ENCODE measurements at regions of chr7 and their contacts with region 1.

Region 1: DNA sequence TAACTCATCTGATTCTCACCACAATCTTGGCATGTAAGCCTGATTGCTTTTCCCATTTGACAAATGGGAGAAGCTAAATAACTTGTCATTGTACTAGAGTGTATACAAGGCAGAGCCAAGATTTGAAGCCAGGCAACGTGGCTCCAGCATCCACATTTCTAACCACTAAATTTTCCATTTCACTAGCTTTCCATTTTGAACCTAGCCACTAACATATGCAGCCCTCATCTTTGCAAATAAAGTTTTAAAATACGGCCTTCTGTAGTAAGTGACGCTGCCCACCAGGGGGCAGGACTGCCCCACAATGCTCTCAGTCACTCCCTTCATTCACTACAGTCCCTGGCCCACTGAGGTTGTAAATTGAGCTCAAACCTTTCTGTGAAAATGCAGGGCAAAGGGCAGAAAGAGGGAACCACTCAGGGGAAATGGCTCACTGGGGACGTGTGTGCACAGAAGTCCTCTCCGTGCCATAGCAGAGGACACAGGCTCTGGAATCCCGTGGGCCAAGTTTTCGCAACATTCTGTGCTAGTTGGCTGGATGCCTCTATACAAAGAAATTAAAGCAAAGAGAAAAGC is 315.7 kb downstream of the TNS3 start:
- DNase-seq: peak; percentile 16
- H3K4me3 ChIP-seq: no peak overlapping the region
- H3K27ac ChIP-seq: no peak overlapping the region
- H3K4me1 ChIP-seq: no peaks in the 10 kb centered on the region
- H3K27me3 ChIP-seq: no peaks in the 10 kb centered on the region
- CTCF ChIP-seq: peak; percentile 80 to 94 (median 88)
- POLR2A ChIP-seq: no peak

Region 2: GRCh38 chr7:47179812-47180515 is 86.3 kb before region 1 on chr7:
- intact Hi-C with region 1: no loop called
- DNase-seq: peak; percentile 40
- H3K4me3 ChIP-seq: no peak overlapping the region
- H3K27ac ChIP-seq: no peak overlapping the region
- H3K4me1 ChIP-seq: peaks cover 3% of the 10 kb centered on the region
- H3K27me3 ChIP-seq: no peaks in the 10 kb centered on the region
- CTCF ChIP-seq: peak; percentile 29 to 76 (median 68)
- POLR2A ChIP-seq: no peak

Region 3: GRCh38 chr7:47392231-47392759 is 126.1 kb after region 1 on chr7:
- intact Hi-C with region 1: loop called (anchors 5 kb)
- DNase-seq: no peak
- H3K4me3 ChIP-seq: no peak overlapping the region
- H3K27ac ChIP-seq: no peak overlapping the region
- H3K4me1 ChIP-seq: no peaks in the 10 kb centered on the region
- H3K27me3 ChIP-seq: no peaks in the 10 kb centered on the region
- CTCF ChIP-seq: peak in 2 of 4 experiments; percentile 39
- POLR2A ChIP-seq: no peak

Region 4: GRCh38 chr7:47435889-47436312 is 169.7 kb after region 1 on chr7:
- intact Hi-C with region 1: loop called (anchors 5 kb)
- DNase-seq: peak; percentile 53
- H3K4me3 ChIP-seq: no peak overlapping the region
- H3K27ac ChIP-seq: no peak overlapping the region
- H3K4me1 ChIP-seq: no peaks in the 10 kb centered on the region
- H3K27me3 ChIP-seq: no peaks in the 10 kb centered on the region
- CTCF ChIP-seq: peak; percentile 26 to 73 (median 63)
- POLR2A ChIP-seq: no peak

Region 5: DNA sequence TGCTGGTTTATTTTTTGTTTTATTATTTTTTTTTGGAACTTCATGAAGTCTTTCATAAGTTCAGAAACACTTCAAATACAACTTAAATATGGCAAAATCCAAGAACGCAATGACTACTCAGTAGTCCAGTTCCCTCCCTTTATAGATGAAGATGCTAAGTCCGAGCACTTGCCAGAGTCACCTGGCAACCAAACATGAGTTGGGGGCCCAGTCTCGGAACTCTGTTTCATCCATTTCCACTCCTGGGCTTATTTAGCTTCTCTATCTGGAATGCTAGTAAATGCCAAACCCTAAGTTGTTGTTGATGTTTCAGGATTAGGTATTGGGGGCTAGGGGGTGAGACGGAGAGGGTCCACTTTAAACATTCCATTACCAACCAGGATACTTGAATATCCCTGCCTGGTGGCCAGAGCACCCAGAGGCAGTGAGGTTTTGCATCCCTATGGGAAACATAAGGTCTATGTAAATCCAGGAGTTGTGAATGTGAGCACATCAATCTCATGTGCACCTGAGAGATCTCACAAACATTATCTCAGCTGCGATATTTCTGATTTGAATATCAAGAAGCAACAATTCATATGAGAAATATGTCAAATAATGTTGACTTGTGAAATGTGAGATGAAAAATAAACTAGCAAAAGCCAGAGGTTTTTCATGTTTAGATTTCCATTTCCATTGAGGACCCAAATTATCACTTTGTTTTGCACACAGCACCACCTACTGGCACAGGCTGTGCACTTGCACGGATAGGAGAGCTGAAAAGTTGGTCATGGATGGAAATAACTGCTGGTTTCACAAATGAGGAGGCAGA is 552.8 kb after region 1 on chr7:
- intact Hi-C with region 1: loop called (anchors 2 kb)
- DNase-seq: peak; percentile 54
- H3K4me3 ChIP-seq: no peak overlapping the region
- H3K27ac ChIP-seq: no peak overlapping the region
- H3K4me1 ChIP-seq: no peaks in the 10 kb centered on the region
- H3K27me3 ChIP-seq: no peaks in the 10 kb centered on the region
- CTCF ChIP-seq: peak; percentile 81 to 94 (median 92)
- POLR2A ChIP-seq: no peak